ENCODE measurements at regions of chr9 and their contacts with region 1.

Region 1: DNA sequence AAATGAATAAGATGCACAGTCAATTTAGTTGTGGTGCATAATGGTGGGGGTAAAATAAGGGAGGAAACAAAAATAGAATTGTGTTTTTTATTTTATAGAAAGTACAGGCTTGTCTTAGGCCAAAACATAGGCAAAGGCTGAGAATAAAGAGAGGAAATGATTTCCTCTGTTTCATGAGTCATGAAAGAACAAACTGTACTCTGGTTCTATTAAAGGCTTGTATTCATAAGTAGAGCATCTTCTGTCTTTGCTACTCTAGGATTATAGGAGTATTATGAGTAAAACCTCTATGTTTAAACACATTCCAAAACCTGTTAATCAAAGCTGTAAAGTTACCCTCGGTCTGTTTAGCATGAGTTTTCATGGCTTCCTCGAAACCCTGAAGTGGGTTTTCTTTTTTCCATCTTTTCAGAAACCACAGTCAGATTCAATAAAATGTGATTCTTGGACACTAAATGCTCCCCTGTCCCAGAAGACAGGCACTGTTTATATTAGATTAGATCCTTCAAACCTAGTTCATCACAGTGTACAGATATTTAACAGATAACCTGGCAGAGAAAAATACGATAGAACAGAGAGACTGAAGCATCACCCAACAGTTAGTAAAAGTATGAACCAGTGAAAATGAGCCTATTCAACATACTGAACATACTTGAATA is 473.9 kb upstream of the CYLC2 start:
- DNase-seq: no peak
- H3K4me3 ChIP-seq: no peak overlapping the region
- H3K27ac ChIP-seq: no peak overlapping the region
- H3K4me1 ChIP-seq: no peaks in the 10 kb centered on the region
- H3K27me3 ChIP-seq: no peaks in the 10 kb centered on the region
- CTCF ChIP-seq: no peak

Region 2: DNA sequence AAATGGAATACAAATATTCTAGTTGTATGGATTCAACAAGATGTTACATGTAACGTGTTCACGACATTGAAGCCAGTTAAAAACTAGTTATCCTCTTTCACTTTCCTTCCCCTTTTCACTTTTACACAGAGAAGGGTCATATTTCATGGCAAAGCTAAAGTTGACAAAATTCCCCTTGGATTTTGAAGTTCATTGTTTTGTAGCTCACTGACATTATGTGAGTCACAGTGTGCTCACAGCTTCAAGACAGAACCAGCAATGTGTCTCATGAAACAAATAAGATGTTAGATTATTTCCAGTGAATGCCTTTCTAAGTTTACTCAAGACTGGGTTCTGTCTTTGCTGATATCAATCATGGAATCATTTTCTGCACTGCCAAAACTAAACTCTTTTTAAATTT is 247.3 kb before region 1 on chr9:
- CTCF ChIA-PET with region 1: no interaction called
- POLR2A ChIA-PET with region 1: no interaction called
- intact Hi-C with region 1: loop called (anchors 5 kb)
- DNase-seq: no peak
- H3K4me3 ChIP-seq: no peak overlapping the region
- H3K27ac ChIP-seq: no peak overlapping the region
- H3K4me1 ChIP-seq: no peaks in the 10 kb centered on the region
- H3K27me3 ChIP-seq: no peaks in the 10 kb centered on the region
- CTCF ChIP-seq: no peak

Measured in A673 (cell line).